ENCODE measurements at regions of chr7 and their contacts with region 1.

Region 1: GRCh38 chr7:142711746-142712619 is 37.3 kb upstream of the PRSS1 start:
- DNase-seq: peak; percentile 52 to 87 (median 56)
- H3K4me3 ChIP-seq: peak overlapping the region in 1 of 7 experiments; percentile 54
- H3K27ac ChIP-seq: peak overlapping the region in 1 of 2 experiments; percentile 74
- H3K4me1 ChIP-seq: peaks cover 50 to 91% (median 82%) of the 10 kb centered on the region in 4 experiments
- H3K27me3 ChIP-seq: no peaks in the 10 kb centered on the region

Region 2: GRCh38 chr7:142669074-142669654 is 42.8 kb before region 1 on chr7:
- CTCF ChIA-PET with region 1: interaction called, 41 read pairs
- POLR2A ChIA-PET with region 1: interaction called, 4 read pairs
- DNase-seq: peak; percentile 31 to 50 (median 49)
- H3K4me3 ChIP-seq: no peak overlapping the region
- H3K27ac ChIP-seq: no peak overlapping the region
- H3K4me1 ChIP-seq: peaks cover 17 to 43% (median 34%) of the 10 kb centered on the region in 4 experiments
- H3K27me3 ChIP-seq: no peaks in the 10 kb centered on the region

Region 3: GRCh38 chr7:142722248-142722794 is 10.3 kb after region 1 on chr7:
- CTCF ChIA-PET with region 1: interaction called, 25 read pairs
- POLR2A ChIA-PET with region 1: no interaction called
- DNase-seq: peak in 1 of 3 donors; percentile 46
- H3K4me3 ChIP-seq: peak overlapping the region in 4 of 7 experiments; percentile 2 to 55 (median 52)
- H3K27ac ChIP-seq: peak overlapping the region; percentile 36 to 75
- H3K4me1 ChIP-seq: peaks cover 31 to 67% (median 46%) of the 10 kb centered on the region in 4 experiments
- H3K27me3 ChIP-seq: no peaks in the 10 kb centered on the region

Region 4: DNA sequence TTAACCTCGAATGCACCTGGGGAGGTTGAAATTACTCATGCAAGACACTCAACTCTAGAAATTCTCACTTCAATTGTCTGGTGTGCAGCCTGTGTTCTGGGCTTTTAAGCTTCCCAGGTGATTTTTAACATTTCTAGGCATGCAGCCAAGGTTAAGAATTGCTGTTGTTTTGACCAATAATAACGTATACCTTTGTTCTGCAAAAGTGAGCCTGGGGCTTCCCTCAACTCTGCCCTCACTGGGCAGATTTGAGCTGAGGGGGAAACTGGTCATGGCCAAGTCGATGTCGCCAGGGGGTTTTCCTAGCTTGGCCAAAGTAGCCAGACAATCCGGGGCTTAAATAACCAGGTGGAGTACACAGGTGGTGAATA is 59.4 kb after region 1 on chr7:
- CTCF ChIA-PET with region 1: interaction called, 44 read pairs
- POLR2A ChIA-PET with region 1: no interaction called
- DNase-seq: peak in 2 of 3 donors; percentile 34 to 41
- H3K4me3 ChIP-seq: no peak overlapping the region
- H3K27ac ChIP-seq: no peak overlapping the region
- H3K4me1 ChIP-seq: peaks cover 0 to 28% (median 16%) of the 10 kb centered on the region in 4 experiments
- H3K27me3 ChIP-seq: no peaks in the 10 kb centered on the region

Region 5: DNA sequence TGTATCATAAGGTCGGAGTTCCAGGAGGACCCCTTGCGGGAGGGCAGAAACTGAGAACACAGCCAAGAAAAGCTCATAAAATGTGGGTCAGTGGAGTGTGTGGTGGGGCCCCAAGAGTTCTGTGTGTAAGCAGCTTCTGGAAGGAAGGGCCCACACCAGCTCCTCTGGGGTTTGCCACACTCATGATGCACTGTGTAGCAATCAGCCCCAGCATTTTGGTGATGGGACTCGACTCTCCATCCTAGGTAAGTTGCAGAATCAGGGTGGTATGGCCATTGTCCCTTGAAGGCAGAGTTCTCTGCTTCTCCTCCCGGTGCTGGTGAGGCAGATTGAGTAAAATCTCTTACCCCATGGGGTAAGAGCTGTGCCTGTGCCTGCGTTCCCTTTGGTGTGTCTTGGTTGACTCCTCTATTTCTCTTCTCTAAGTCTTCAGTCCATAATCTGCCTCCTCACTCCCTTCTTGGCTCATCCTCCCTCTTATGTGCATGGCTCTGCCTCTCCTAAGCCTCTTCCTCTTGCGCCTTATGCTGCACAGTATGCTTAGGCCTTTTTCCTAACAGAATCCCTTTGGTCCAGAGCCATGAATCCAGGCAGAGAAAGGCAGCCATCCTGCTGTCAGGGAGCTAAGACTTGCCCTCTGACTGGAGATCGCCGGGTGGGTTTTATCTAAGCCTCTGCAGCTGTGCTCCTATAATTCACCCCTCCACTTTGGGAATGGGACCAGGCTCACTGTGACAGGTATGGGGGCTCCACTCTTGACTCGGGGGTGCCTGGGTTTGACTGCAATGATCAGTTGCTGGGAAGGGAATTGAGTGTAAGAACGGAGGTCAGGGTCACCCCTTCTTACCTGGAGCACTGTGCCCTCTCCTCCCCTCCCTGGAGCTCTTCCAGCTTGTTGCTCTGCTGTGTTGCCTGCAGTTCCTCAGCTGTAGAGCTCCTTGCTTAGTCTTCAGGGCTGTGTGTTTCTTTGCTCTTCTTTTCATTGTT is 76.6 kb after region 1 on chr7:
- CTCF ChIA-PET with region 1: interaction called, 93 read pairs
- POLR2A ChIA-PET with region 1: interaction called, 7 read pairs
- DNase-seq: no peak
- H3K4me3 ChIP-seq: no peak overlapping the region
- H3K27ac ChIP-seq: no peak overlapping the region
- H3K4me1 ChIP-seq: peaks cover 2 to 39% (median 32%) of the 10 kb centered on the region in 4 experiments
- H3K27me3 ChIP-seq: no peaks in the 10 kb centered on the region